ENCODE measurements at regions of chr1 and their contacts with region 1.

Region 1: GRCh38 chr1:177645491-177646190 is 324.2 kb downstream of the SEC16B start:
- DNase-seq: no peak
- ATAC-seq: no peak
- H3K4me3 ChIP-seq: no peak overlapping the region
- H3K27ac ChIP-seq: no peak overlapping the region
- H3K4me1 ChIP-seq: no peaks in the 10 kb centered on the region
- H3K27me3 ChIP-seq: no peaks in the 10 kb centered on the region
- CTCF ChIP-seq: no peak

Region 2: DNA sequence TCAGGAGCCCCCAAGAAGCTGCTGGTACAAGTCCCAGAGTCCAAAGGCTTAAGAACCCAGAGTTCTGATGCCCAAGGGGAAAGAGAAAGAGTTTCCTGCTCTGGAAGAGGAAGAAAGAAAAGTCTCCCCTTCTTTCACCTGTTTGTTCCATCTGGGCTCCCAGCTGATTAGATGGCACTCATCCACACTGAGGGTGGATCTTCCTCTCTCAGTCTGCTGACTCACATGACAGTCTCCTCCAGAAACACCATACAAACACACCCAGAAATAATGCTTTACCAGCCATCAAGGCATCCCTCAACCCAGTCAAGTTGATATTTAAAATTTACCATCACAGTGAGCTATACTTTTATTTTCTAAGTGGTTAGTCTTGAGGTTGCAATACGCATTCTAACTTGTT is 924.8 kb before region 1 on chr1:
- intact Hi-C with region 1: loop called in 1 of 2 experiments (anchors 10 kb)
- DNase-seq: no peak
- ATAC-seq: no peak
- H3K4me3 ChIP-seq: no peak overlapping the region
- H3K27ac ChIP-seq: no peak overlapping the region
- H3K4me1 ChIP-seq: peaks cover 8% of the 10 kb centered on the region
- H3K27me3 ChIP-seq: no peaks in the 10 kb centered on the region
- CTCF ChIP-seq: no peak

Region 3: DNA sequence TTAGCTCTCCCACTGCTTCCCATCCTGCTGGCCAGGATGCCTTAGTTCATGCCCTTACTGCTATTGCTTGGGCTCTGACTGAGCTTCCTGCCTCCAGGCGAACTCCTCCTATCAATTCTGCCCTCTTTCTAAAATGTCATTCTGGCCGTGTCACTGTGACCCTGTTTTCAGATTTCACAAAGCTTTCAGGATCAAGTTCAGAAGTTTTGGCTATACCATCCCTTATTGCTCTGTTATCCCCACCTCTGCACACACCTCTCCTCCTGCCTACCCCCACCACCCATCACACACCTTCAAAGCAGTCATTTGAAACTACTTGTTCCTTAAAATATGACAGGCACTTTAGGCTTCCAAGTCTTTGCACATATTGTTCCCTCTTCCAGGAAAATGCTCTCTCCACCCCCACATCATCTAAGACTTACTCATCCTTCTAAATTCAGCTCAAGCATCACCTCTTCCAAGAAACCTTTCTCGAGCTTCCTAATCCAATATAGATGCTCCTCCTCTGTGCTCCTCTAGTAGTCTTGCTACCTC is 196.8 kb before region 1 on chr1:
- intact Hi-C with region 1: loop called in 1 of 2 experiments (anchors 10 kb)
- DNase-seq: peak in 1 of 2 donors; percentile 55
- ATAC-seq: peak; percentile 80 to 90 (median 83)
- H3K4me3 ChIP-seq: no peak overlapping the region
- H3K27ac ChIP-seq: peak overlapping the region; percentile 83
- H3K4me1 ChIP-seq: peaks cover 43% of the 10 kb centered on the region
- H3K27me3 ChIP-seq: no peaks in the 10 kb centered on the region
- CTCF ChIP-seq: no peak